K562 (cell line): ENCODE measurements at regions of chr9 and their contacts with region 1.

Region 1: DNA sequence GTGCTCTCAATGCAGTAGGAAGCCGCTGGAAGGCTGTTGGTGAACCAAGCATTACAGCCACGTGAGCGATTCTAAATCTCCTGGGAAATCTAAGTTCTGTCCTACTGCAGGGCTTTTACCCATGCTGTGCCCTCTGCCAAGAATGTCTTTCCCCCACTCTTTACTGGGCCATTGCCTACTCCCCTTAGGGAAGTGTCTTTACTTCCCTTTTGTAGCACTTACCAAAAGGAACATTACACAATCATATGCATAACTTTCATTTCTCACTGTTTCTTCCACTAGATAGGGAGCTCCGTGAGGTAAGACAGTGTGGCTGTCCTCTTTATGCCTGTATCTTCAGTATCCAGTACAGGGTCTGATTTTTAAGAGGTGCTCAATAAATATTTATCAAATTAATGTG is 241.7 kb upstream of the NR4A3 start:
- DNase-seq: no peak
- ATAC-seq: no peak
- H3K4me3 ChIP-seq: no peak overlapping the region
- H3K27ac ChIP-seq: no peak overlapping the region
- H3K4me1 ChIP-seq: no peaks in the 10 kb centered on the region
- H3K27me3 ChIP-seq: no peaks in the 10 kb centered on the region
- CTCF ChIP-seq: no peak
- EP300 ChIP-seq: no peak
- POLR2A ChIP-seq: no peak
- RAD21 ChIP-seq: no peak

Region 2: DNA sequence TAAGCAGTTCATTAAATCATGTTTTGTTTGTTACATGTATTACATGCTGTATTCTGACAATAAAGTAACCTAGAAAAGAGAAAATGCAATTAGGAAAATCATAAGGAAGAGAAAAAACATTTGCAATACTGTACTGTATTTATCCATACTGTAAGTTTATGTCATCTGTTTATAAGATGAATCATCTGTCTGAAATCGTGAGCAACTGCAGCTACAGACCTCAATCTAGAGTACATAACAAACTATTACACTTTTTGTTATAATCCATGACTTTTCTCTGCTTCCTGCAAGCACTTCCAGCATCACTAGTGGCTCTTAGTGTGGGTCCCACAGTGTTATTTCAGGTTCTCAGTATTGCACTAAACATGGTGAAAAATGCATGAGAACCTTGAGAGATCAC is 97.3 kb after region 1 on chr9:
- CTCF ChIA-PET with region 1: no interaction called
- POLR2A ChIA-PET with region 1: no interaction called
- in situ Hi-C with region 1: no loop called
- intact Hi-C with region 1: loop called (anchors 10 kb)
- DNase-seq: no peak
- ATAC-seq: no peak
- H3K4me3 ChIP-seq: no peak overlapping the region
- H3K27ac ChIP-seq: no peak overlapping the region
- H3K4me1 ChIP-seq: no peaks in the 10 kb centered on the region
- H3K27me3 ChIP-seq: no peaks in the 10 kb centered on the region
- CTCF ChIP-seq: no peak
- EP300 ChIP-seq: no peak
- POLR2A ChIP-seq: no peak
- RAD21 ChIP-seq: no peak